CD4-positive, alpha-beta memory T cell (primary cell): ENCODE measurements at regions of chr1 and their contacts with region 1.

Region 1: DNA sequence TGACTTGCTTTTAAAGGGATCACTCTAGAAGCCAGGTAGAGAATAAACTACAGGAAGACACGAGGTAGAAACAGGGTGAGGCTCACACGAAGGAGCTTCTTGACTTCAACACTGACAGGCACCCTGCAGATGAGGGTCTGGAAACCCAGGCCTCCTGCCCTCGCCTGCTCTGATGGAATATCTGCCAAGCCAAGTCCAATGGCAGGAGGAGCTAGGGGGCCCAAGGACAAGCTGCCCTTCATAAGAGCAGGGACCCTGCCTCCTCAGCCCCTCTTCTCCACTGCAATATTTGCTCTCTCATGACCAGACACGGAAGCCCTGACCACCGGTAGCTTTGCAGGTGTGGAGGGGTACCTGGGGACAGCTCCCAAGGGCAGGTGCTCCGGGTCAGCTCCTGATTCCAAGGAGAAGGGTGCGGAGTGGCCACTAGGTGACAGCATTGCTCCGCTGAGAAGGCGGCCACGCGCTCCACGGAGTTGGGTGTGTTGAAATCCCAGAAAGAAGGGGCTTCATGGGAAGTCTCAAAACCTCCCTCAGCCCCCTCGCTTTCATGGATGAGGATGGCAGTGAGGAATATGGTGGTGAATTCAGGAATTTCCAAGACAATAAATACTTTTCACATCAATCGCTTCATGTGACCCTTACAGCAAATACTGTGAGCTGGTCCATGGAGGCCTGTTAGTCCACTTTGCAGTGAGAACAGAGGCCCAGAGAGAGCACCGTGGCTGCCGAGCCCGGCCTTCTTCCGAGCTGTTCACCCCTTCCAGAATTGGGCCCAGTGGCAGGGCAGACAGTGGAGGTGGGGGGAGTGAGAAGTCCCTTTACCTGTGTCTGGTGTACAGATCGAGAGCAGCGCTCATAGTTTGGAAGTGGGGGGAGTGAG is 33.2 kb upstream of the PAX7 start:
- DNase-seq: peak in 4 of 5 donors; percentile 25 to 36 (median 30)
- H3K4me3 ChIP-seq: no peak overlapping the region
- H3K4me3 Mint-ChIP-seq: no peak overlapping the region
- H3K27ac ChIP-seq: no peak overlapping the region
- H3K27ac Mint-ChIP-seq: no peak overlapping the region
- H3K4me1 ChIP-seq: no peaks in the 10 kb centered on the region
- H3K4me1 Mint-ChIP-seq: no peaks in the 10 kb centered on the region
- H3K27me3 ChIP-seq: peaks cover 3% of the 10 kb centered on the region
- H3K27me3 Mint-ChIP-seq: peaks cover 13 to 29% of the 10 kb centered on the region in 2 donors

Region 2: GRCh38 chr1:18373882-18374493 is 223.4 kb before region 1 on chr1:
- CTCF ChIA-PET with region 1: no interaction called
- POLR2A ChIA-PET with region 1: no interaction called
- intact Hi-C with region 1: no loop called
- DNase-seq: no peak
- H3K4me3 ChIP-seq: no peak overlapping the region
- H3K4me3 Mint-ChIP-seq: no peak overlapping the region
- H3K27ac ChIP-seq: no peak overlapping the region
- H3K27ac Mint-ChIP-seq: no peak overlapping the region
- H3K4me1 ChIP-seq: no peaks in the 10 kb centered on the region
- H3K4me1 Mint-ChIP-seq: no peaks in the 10 kb centered on the region
- H3K27me3 ChIP-seq: no peaks in the 10 kb centered on the region
- H3K27me3 Mint-ChIP-seq: peaks cover 11 to 12% of the 10 kb centered on the region in 2 donors

Region 3: GRCh38 chr1:18632783-18633421 is 35.5 kb after region 1 on chr1:
- CTCF ChIA-PET with region 1: no interaction called
- POLR2A ChIA-PET with region 1: no interaction called
- intact Hi-C with region 1: no loop called
- DNase-seq: no peak
- H3K4me3 ChIP-seq: no peak overlapping the region
- H3K4me3 Mint-ChIP-seq: peak overlapping the region in 1 of 8 donors; percentile 12
- H3K27ac ChIP-seq: no peak overlapping the region
- H3K27ac Mint-ChIP-seq: no peak overlapping the region
- H3K4me1 ChIP-seq: no peaks in the 10 kb centered on the region
- H3K4me1 Mint-ChIP-seq: peaks cover 8 to 29% (median 15%) of the 10 kb centered on the region in 4 donors
- H3K27me3 ChIP-seq: peaks cover 37% of the 10 kb centered on the region
- H3K27me3 Mint-ChIP-seq: peaks cover 67% of the 10 kb centered on the region in 2 donors

Region 4: DNA sequence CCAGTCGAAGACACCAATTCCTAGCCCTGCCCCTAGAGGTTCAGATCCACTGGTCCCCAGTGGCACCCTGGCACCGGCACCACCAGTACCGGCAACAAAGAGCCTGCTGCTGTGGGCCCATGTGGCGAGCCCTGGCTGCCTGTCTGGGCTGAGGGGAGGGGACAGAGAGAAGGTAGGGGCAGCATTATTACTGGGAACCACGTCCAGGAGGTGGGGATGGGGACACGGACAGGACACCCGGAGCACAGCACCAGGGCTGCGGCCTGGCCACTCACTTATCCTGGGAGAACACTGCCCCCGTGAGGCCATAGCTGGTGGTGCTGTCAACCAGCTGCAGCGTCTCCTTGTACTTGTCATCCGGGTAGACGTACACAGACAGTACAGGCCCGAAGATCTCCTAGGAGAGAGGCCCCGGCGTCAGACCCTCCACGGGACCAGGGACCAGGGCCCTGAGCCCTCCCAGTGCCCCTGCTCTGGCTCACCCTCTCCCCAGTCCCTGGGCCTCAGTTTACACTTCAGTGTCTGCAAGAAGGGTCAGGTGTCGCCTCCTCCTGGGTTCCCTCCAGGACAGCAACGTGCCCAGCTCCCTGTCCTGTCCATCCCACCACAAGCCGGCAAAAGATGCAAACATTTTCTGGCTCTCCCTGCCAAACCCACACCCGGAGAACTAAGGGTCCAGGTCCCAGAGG is 277.9 kb after region 1 on chr1:
- CTCF ChIA-PET with region 1: interaction called, 19 read pairs
- POLR2A ChIA-PET with region 1: no interaction called
- intact Hi-C with region 1: no loop called
- DNase-seq: peak; percentile 47 to 71 (median 52)
- H3K4me3 ChIP-seq: no peak overlapping the region
- H3K4me3 Mint-ChIP-seq: no peak overlapping the region
- H3K27ac ChIP-seq: no peak overlapping the region
- H3K27ac Mint-ChIP-seq: no peak overlapping the region
- H3K4me1 ChIP-seq: no peaks in the 10 kb centered on the region
- H3K4me1 Mint-ChIP-seq: no peaks in the 10 kb centered on the region
- H3K27me3 ChIP-seq: no peaks in the 10 kb centered on the region
- H3K27me3 Mint-ChIP-seq: no peaks in the 10 kb centered on the region